Heart left ventricle (tissue), 16 donors: ENCODE measurements at regions of chr1 and their contacts with region 1.

Region 1: DNA sequence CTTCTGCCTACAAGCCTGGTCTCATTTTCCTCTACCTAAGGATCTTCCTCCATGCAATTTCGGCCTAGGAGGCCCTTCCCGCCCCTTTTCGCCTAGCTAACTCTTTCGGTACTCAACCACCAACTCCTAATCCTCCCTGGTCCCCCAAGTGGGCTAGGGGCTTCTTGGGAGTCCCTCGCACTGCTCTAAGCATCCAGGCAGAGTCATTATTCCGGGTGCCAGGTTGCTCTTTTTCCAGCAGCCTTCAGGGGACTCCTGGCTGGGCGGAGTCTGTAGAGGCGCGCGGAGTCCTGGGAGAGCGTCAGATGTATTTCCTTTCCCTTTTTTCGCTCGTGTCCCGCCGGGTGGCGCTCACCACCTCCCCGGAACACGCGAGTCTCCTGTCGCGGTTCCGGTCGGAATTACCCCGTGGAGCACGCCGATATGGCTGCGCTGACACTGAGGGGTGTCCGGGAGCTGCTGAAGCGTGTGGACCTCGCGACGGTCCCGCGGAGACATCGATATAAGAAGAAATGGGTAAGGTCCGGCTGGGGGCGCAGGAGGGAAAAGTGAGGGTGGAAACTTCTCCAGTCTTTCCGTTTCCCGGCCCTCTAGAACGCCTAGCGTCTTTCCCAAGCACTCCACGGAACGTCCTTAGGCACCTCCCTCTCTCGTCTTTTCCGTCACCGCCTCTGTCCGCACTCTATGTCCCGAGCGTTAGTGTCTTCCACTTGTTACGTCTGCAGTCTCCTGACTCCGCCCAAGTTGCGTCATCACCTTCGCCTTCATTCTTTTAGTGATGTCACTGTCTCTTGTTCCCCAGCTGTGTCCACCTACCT is at the start of gene NSUN4:
- DNase-seq: peak; percentile 92 to 96 (median 94)
- ATAC-seq: peak; percentile 92 to 95 (median 94)
- H3K4me3 ChIP-seq: peak within 1 kb of the TSS; percentile 51 to 92 (median 70)
- H3K27ac ChIP-seq: peak within 1 kb of the TSS; percentile 89 to 99 (median 94)
- H3K4me1 ChIP-seq: peaks cover 0 to 31% (median 15%) of the 10 kb centered on the region in 12 donors
- H3K27me3 ChIP-seq: no peaks in the 10 kb centered on the region
- CTCF ChIP-seq: peak; percentile 38 to 89 (median 70)
- POLR2A ChIP-seq: peak in 1 of 2 donors; percentile 63
- total RNA-seq, gene NSUN4: 8.9 to 18.3 (median 14.0) TPM

Region 2: DNA sequence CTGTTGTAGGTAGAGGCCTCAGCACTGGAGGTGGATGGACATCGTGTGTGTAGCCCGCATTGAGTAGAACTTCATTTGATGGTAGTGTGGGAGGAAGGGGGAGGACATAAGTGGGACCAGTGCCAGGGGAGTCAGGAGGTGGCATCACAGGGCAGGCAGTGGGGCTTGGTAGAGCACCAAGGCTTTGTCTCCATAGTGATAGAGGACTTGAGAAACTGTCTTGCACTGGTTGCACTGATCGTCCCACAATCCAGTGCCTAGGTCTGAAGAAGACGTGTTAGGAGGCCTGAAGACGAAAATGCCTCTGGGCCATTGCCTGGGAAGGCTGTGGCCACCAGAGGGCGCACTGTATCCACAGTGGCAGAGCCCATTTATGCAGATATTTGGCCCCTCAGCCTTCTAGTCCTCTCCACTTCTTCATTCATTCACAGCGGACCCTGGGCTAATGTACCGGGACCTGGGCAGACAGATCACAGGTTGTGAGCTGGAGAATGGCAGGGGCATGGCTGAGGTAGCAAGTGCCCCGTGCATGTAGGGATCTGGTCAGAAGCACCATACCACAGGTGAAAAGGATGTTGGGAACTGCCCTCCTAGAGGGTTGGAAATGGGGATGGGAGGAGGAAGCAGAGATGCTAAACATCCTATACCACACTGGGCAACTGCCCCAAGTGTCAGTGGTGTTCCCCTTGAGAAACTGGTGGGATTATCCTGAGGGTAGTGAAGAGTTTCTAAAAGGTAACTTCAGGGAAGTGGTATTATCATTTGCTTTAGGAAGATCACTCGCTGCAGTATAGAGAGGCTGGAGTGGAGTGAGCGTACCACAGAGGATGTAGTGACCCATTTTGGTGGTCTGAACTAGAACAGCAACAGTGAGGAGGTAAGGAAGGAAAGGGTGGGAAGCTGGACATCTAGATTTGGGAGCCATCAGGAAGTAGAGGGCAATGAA is 303.4 kb before region 1 on chr1:
- intact Hi-C with region 1: loop called in 1 of 10 experiments (anchors 10 kb)
- DNase-seq: peak; percentile 81 to 92 (median 85)
- ATAC-seq: peak; percentile 35 to 70 (median 59)
- H3K4me3 ChIP-seq: no peak overlapping the region
- H3K27ac ChIP-seq: peak overlapping the region in 9 of 12 donors; percentile 8 to 52 (median 35)
- H3K4me1 ChIP-seq: peaks cover 11 to 67% (median 39%) of the 10 kb centered on the region in 12 donors
- H3K27me3 ChIP-seq: no peaks in the 10 kb centered on the region
- CTCF ChIP-seq: peak; percentile 93 to 99 (median 97)
- POLR2A ChIP-seq: no peak

Region 3: DNA sequence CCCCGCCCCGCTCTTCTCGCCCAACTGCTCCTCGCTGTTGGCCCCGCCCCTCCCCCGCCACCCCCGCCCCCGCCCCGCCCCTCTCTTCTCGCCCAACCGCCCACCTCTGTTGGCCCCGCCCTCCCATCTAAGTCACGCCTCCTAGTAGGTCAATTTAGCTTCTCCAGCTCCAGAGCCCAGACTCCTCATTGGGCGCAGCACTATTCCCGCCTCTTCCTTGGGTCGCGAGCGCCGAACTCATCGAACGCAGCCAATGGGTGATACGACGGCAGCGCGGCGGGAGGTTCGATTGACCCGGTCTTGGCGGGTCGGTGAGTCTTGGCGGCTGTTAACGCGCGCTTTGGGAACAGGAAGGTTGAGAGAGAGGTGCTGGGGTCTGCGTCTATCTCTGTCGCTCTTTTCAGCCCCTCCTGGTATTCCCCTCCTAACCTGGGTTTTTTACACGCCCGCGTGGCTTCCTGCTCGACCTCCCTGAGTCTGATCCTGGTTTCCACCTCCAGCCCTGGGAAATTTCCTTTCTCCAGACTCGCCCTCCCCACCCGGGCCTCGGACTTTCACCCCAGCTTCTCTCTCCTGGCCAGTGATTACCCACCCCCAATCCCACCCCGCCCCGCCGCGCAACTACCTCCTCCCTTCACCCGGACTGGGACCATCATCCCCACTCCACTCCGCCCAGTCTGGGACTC is 93.0 kb before region 1 on chr1 and contains the start of gene RAD54L:
- intact Hi-C with region 1: loop called in 7 of 10 experiments (anchors 1 to 5 kb)
- DNase-seq: peak; percentile 98 to 99 (median 98)
- ATAC-seq: peak; percentile 95 to 97 (median 96)
- H3K4me3 ChIP-seq: peak within 1 kb of the TSS; percentile 41 to 81 (median 69)
- H3K27ac ChIP-seq: peak within 1 kb of the TSS; percentile 53 to 95 (median 82)
- H3K4me1 ChIP-seq: peaks cover 0 to 18% (median 7%) of the 10 kb centered on the region in 12 donors
- H3K27me3 ChIP-seq: no peaks in the 10 kb centered on the region
- CTCF ChIP-seq: no peak
- POLR2A ChIP-seq: no peak
- total RNA-seq, gene RAD54L: 0.44 to 4.0 (median 0.87) TPM in 8 of 9 donors, not detected in the other

Region 4: DNA sequence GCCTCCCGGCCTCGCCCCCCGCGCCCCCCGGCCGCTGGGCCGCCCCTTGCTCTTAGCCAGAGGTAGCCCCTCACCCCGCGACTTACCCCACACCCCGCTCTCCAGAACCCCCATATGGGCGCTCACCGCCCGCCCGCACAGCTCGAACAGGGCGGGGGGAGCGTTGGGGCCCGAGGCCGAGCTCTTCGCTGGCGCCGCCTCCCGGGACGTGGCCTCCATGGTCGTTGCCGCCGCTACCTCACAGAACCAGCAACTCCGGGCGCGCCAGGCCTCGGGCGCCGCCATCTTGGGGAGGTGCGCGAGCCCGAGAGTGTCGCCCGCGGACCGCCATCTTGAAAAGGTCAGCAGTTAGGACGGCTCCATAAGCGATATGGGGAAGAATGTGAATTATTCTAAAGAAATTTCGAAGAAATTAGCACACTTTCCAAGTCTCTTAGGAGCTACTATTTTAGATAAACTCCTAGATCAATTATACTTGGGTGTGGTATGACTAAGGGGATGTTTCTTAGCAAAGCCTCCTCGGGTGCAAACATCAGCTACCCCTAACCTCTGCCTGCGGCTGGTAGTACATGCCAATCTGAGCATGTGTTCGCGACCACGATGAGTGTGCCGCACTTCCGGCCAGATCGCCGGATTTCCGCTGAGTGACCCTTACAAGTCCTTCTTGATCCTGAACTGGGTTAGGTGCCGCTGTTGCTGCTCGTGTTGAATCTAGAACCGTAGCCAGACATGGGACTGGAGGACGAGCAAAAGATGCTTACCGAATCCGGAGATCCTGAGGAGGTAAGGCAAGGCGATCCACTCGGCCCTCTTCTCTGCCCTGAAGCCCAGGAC is 37.4 kb before region 1 on chr1 and contains the starts of genes LRRC41 and UQCRH:
- intact Hi-C with region 1: loop called in 9 of 10 experiments (anchors 2 to 5 kb)
- DNase-seq: peak; percentile 95 to 96 (median 96)
- ATAC-seq: peak; percentile 88 to 94 (median 93)
- H3K4me3 ChIP-seq: peak within 1 kb of the TSS; percentile 73 to 98 (median 90)
- H3K27ac ChIP-seq: peak within 1 kb of the TSS; percentile 93 to 100 (median 98)
- H3K4me1 ChIP-seq: peaks cover 8 to 76% (median 59%) of the 10 kb centered on the region in 12 donors
- H3K27me3 ChIP-seq: no peaks in the 10 kb centered on the region
- CTCF ChIP-seq: peak in 2 of 12 donors; percentile 1 to 6
- POLR2A ChIP-seq: peak; percentile 14 to 44
- total RNA-seq, gene LRRC41: 34.7 to 60.5 (median 45.8) TPM
- total RNA-seq, gene UQCRH: 622 to 2,380 (median 940) TPM

Region 5: GRCh38 chr1:46547481-46548383 is 207.1 kb after region 1 on chr1:
- intact Hi-C with region 1: no loop called
- DNase-seq: peak in 2 of 5 donors; percentile 22 to 48
- ATAC-seq: peak in 2 of 4 donors; percentile 26 to 44
- H3K4me3 ChIP-seq: no peak overlapping the region
- H3K27ac ChIP-seq: no peak overlapping the region
- H3K4me1 ChIP-seq: peaks cover 0 to 8% (median 0%) of the 10 kb centered on the region in 12 donors
- H3K27me3 ChIP-seq: peaks cover 11 to 64% (median 30%) of the 10 kb centered on the region in 9 donors
- CTCF ChIP-seq: peak; percentile 21 to 51 (median 36)
- POLR2A ChIP-seq: no peak